HEK293 (cell line): ENCODE measurements at regions of chr16 and their contacts with region 1.

Region 1: GRCh38 chr16:30571695-30572600 is at the start of gene ZNF688:
- H3K4me3 ChIP-seq: peak within 1 kb of the TSS; percentile 64
- H3K27ac ChIP-seq: peak within 1 kb of the TSS; percentile 96
- H3K4me1 ChIP-seq: peaks cover 5% of the 10 kb centered on the region; the same call in 1 of the 2 replicates
- CTCF ChIP-seq: no peak; the same call in 1 of the 2 replicates

Region 2: GRCh38 chr16:30417529-30418349 is 154.2 kb before region 1 on chr16:
- CTCF ChIA-PET with region 1: no interaction called
- POLR2A ChIA-PET with region 1: interaction called, 12 read pairs
- H3K4me3 ChIP-seq: peak overlapping the region; percentile 37
- H3K27ac ChIP-seq: peak overlapping the region; percentile 85
- H3K4me1 ChIP-seq: peaks cover 12% of the 10 kb centered on the region
- CTCF ChIP-seq: peak; percentile 89

Region 3: GRCh38 chr16:30534368-30535105 is 37.4 kb before region 1 on chr16 and contains the start of gene ZNF747:
- CTCF ChIA-PET with region 1: interaction called, 6 read pairs
- POLR2A ChIA-PET with region 1: interaction called, 33 read pairs
- H3K4me3 ChIP-seq: peak within 1 kb of the TSS; percentile 59
- H3K27ac ChIP-seq: peak within 1 kb of the TSS; percentile 91
- H3K4me1 ChIP-seq: peaks cover 2% of the 10 kb centered on the region; the same call in 1 of the 2 replicates
- CTCF ChIP-seq: peak; percentile 75

Region 4: GRCh38 chr16:30602616-30603277 is 30.8 kb after region 1 on chr16:
- CTCF ChIA-PET with region 1: interaction called, 12 read pairs
- POLR2A ChIA-PET with region 1: interaction called, 5 read pairs
- H3K4me3 ChIP-seq: no peak overlapping the region
- H3K27ac ChIP-seq: no peak overlapping the region
- H3K4me1 ChIP-seq: no peaks in the 10 kb centered on the region
- CTCF ChIP-seq: no peak

Region 5: DNA sequence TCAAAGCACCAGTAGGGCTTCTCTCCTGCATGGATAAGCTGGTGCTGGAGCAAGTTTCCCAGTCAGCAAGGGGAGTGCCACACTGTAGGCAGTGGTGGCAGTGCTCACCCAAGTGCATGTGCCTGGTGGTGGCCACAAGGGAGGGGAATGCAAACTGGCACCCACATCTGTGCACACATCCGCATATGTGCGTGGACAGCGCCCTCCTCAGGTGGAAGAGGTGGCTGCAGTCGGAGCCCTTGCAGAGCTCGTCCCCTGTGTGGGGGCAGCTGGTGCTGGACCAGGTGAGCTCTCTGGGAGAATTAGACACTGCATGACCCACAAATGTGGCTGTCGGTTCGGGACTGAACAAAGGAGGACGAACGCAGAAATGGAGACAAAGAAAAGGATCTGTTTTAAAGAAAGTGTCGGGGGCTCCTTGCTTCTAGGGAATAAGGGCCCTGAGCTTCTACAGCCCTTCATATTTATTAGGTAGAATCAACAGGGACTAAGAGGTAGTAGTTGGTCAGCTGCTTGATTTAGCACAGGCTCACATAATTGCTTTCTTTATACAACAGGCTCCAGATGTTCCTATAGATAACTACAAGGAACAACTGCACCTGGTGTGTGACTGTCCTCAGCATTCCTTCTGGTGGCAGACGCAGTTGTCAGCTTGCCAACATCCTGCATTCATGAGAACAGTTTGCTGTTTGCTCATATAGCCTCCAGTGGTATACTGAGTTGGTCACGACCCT is 43.6 kb after region 1 on chr16:
- CTCF ChIA-PET with region 1: interaction called, 10 read pairs
- POLR2A ChIA-PET with region 1: interaction called, 18 read pairs
- H3K4me3 ChIP-seq: no peak overlapping the region
- H3K27ac ChIP-seq: no peak overlapping the region
- H3K4me1 ChIP-seq: no peaks in the 10 kb centered on the region
- CTCF ChIP-seq: peak; percentile 95

Region 6: GRCh38 chr16:30641378-30641982 is 69.5 kb after region 1 on chr16:
- CTCF ChIA-PET with region 1: no interaction called
- POLR2A ChIA-PET with region 1: no interaction called
- H3K4me3 ChIP-seq: no peak overlapping the region
- H3K27ac ChIP-seq: no peak overlapping the region
- H3K4me1 ChIP-seq: no peaks in the 10 kb centered on the region
- CTCF ChIP-seq: no peak

Region 7: DNA sequence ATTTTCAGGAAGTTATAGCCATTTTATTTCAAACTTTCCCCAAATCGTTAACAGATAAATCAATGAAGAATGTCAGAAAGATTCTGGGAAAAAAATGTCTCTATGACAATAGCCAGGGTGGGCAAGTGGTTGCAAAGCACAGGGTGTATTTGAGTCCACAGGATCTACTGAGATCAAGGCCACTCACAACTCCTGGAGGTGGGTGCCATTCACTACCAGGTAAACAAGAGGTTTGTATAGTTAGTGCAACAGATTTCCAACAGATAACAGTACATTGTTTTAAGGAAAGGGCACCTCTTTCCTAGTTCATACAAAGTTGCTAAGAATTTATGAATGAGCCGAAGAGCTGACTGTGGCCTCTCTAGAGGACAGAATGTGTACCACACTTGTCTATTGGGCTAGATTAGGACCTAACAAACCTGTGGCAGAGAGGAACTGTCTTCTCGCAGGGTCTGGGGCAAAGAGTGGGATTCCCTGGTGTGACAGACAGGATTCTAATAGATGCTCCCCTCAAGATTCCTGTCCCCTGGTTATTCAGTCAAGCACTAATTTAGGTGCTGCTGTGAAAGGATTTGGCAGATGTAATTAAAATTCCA is 267.0 kb after region 1 on chr16:
- CTCF ChIA-PET with region 1: no interaction called
- POLR2A ChIA-PET with region 1: no interaction called
- H3K4me3 ChIP-seq: no peak overlapping the region
- H3K27ac ChIP-seq: no peak overlapping the region
- H3K4me1 ChIP-seq: no peaks in the 10 kb centered on the region
- CTCF ChIP-seq: no peak